Activated T-helper 1 cell treated with anti-CD3 and anti-CD28 coated beads, Interleukin-12 subunit alpha, Interleukin-12 subunit beta, Interleukin-2, Interleukin-4 antibody, amounts not matched to agents 30 ng/mL and 10 ng/mL and 1 ng/mL, durations not matched to agents 14 hours and 24 hours and 36 hours (primary cell): ENCODE measurements at regions of chr16 and their contacts with region 1.

Region 1: GRCh38 chr16:81366316-81366932 is 51.7 kb downstream of the GAN start:
- DNase-seq: no peak
- H3K4me3 Mint-ChIP-seq: no peak overlapping the region
- H3K27ac Mint-ChIP-seq: no peak overlapping the region
- H3K4me1 Mint-ChIP-seq: no peaks in the 10 kb centered on the region
- H3K27me3 Mint-ChIP-seq: no peaks in the 10 kb centered on the region

Region 2: GRCh38 chr16:81204798-81205680 is 161.4 kb before region 1 on chr16:
- intact Hi-C with region 1: loop called (anchors 5 kb)
- DNase-seq: peak; percentile 10
- H3K4me3 Mint-ChIP-seq: no peak overlapping the region
- H3K27ac Mint-ChIP-seq: no peak overlapping the region
- H3K4me1 Mint-ChIP-seq: no peaks in the 10 kb centered on the region
- H3K27me3 Mint-ChIP-seq: peaks cover 11% of the 10 kb centered on the region

Region 3: GRCh38 chr16:81335669-81336068 is 30.8 kb before region 1 on chr16:
- intact Hi-C with region 1: no loop called
- DNase-seq: no peak
- H3K4me3 Mint-ChIP-seq: no peak overlapping the region
- H3K27ac Mint-ChIP-seq: peak overlapping the region; percentile 53
- H3K4me1 Mint-ChIP-seq: peaks cover 13% of the 10 kb centered on the region
- H3K27me3 Mint-ChIP-seq: no peaks in the 10 kb centered on the region

Region 4: GRCh38 chr16:81403616-81404373 is 37.4 kb after region 1 on chr16:
- intact Hi-C with region 1: loop called (anchors 1 kb)
- DNase-seq: peak; percentile 65
- H3K4me3 Mint-ChIP-seq: no peak overlapping the region
- H3K27ac Mint-ChIP-seq: no peak overlapping the region
- H3K4me1 Mint-ChIP-seq: no peaks in the 10 kb centered on the region
- H3K27me3 Mint-ChIP-seq: peaks cover 4% of the 10 kb centered on the region

Region 5: GRCh38 chr16:81623363-81624102 is 257.1 kb after region 1 on chr16:
- intact Hi-C with region 1: loop called (anchors 1 kb)
- DNase-seq: peak; percentile 42
- H3K4me3 Mint-ChIP-seq: no peak overlapping the region
- H3K27ac Mint-ChIP-seq: peak overlapping the region; percentile 70
- H3K4me1 Mint-ChIP-seq: peaks cover 25% of the 10 kb centered on the region
- H3K27me3 Mint-ChIP-seq: no peaks in the 10 kb centered on the region

Region 6: DNA sequence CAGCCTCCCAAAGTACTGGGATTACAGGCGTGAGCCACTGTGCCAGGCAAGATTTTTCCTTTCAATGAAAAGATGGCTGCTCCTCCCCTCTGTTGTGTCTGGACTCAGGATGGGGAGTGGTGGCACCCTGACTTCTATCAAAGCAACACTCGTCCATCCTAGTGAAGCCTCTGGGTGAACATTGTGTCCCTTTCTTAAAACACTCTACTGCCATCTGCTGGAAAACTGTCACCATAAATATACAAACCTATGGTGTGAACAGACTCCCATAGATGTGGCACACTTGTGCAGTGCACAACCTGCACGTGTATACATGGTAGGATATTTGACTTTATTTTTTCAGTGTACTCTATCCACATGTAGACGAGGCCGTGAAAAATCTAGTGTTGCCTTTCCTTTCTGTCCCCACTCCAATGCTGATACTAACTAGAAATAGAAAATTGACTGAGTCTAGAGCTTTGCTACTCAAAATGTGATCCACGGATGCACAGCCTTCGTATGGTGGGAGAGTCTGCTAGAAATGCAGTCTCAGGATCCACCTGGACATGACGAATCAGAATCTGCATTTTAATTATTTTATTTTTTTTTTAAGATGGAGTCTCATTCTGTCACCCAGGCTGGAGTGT is 356.8 kb after region 1 on chr16:
- intact Hi-C with region 1: loop called (anchors 1 kb)
- DNase-seq: peak; percentile 30
- H3K4me3 Mint-ChIP-seq: no peak overlapping the region
- H3K27ac Mint-ChIP-seq: no peak overlapping the region
- H3K4me1 Mint-ChIP-seq: peaks cover 21% of the 10 kb centered on the region
- H3K27me3 Mint-ChIP-seq: peaks cover 12% of the 10 kb centered on the region

Region 7: DNA sequence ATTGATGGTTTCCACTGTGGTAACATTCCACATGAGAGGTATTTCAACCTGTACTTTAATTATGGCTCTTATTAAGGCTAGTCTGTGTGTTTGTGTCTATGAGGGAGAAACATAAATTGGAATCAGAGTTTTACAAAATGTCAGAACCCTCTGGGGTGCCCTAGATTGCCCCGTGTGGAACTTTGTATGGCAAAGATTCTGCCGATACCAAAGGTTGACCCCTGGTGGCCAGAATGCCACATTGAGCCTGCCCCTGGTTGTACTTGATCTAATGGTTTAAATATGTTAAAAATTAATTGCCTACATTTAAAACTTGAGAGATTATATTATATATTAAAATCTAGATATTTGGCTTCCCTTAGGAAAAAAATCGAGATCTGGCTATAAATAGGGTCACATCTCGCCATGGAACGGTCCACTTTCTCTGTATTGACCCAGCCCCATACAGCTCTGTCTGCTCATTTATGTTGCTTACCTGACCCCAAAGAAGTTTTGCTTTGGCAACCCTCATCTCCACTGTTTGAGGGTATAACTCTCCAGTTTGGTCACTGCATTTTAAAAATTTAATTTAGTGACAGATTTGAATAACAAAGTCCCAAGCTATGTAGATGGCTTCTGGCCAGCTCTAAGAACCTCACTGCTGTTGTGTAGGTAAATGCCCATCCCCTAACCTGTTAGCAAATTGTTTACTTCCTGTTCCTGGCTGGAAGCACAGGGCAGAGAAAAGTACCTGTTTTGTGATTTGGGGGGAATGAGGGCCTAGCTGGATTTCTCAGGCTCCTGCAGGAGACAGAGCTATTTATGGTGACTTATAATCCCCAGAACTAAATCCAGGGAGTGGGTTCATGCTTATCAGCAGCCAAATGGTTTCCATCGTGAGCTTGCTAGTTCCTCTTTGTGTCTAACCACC is 507.7 kb after region 1 on chr16:
- intact Hi-C with region 1: loop called (anchors 5 kb)
- DNase-seq: peak; percentile 38
- H3K4me3 Mint-ChIP-seq: no peak overlapping the region
- H3K27ac Mint-ChIP-seq: no peak overlapping the region
- H3K4me1 Mint-ChIP-seq: peaks cover 8% of the 10 kb centered on the region
- H3K27me3 Mint-ChIP-seq: peaks cover 12% of the 10 kb centered on the region

Region 8: GRCh38 chr16:81885976-81886586 is 519.7 kb after region 1 on chr16:
- intact Hi-C with region 1: loop called (anchors 5 kb)
- DNase-seq: peak; percentile 3
- H3K4me3 Mint-ChIP-seq: no peak overlapping the region
- H3K27ac Mint-ChIP-seq: no peak overlapping the region
- H3K4me1 Mint-ChIP-seq: no peaks in the 10 kb centered on the region
- H3K27me3 Mint-ChIP-seq: no peaks in the 10 kb centered on the region